Endothelial cell of umbilical vein (primary cell): ENCODE measurements at regions of chr15 and their contacts with region 1.

Region 1: GRCh38 chr15:82709421-82710207 is at the start of gene AP3B2:
- DNase-seq: peak; percentile 41
- H3K4me3 ChIP-seq: peak within 1 kb of the TSS; percentile 42 to 50 (median 45)
- H3K27ac ChIP-seq: no peak within 1 kb of the TSS
- H3K4me1 ChIP-seq: peaks cover 2% of the 10 kb centered on the region
- H3K27me3 ChIP-seq: no peaks in the 10 kb centered on the region
- CTCF ChIP-seq: no peak
- POLR2A ChIP-seq: no peak
- total RNA-seq, gene AP3B2: not detected in 2 replicates

Region 2: GRCh38 chr15:82663186-82663600 is 46.4 kb before region 1 on chr15:
- CTCF ChIA-PET with region 1: interaction called, 3 read pairs
- POLR2A ChIA-PET with region 1: no interaction called
- dilution Hi-C with region 1: no loop called
- intact Hi-C with region 1: loop called (anchors 2 kb)
- DNase-seq: peak; percentile 17
- H3K4me3 ChIP-seq: no peak overlapping the region
- H3K27ac ChIP-seq: no peak overlapping the region
- H3K4me1 ChIP-seq: no peaks in the 10 kb centered on the region
- H3K27me3 ChIP-seq: no peaks in the 10 kb centered on the region
- CTCF ChIP-seq: no peak
- POLR2A ChIP-seq: no peak

Region 3: DNA sequence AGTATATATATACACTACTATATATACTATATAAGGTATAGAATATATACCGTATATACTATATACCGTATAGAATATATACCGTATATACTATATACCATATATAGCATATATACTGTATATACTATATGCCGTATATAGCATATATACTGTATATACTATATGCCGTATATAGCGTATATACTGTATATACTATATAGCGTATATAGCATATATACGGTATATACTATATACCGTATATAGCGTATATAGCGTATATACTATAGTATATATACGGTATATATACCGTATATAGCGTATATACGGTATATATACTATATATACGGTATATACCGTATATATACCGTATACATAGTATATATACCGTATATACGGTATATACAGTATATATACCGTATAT is 520.6 kb after region 1 on chr15:
- CTCF ChIA-PET with region 1: no interaction called
- POLR2A ChIA-PET with region 1: no interaction called
- dilution Hi-C with region 1: no loop called
- intact Hi-C with region 1: no loop called
- DNase-seq: no peak
- H3K4me3 ChIP-seq: no peak overlapping the region
- H3K27ac ChIP-seq: no peak overlapping the region
- H3K4me1 ChIP-seq: no peaks in the 10 kb centered on the region
- H3K27me3 ChIP-seq: peaks cover 0 to 2% of the 10 kb centered on the region in 2 experiments
- CTCF ChIP-seq: no peak
- POLR2A ChIP-seq: no peak